Vagina (tissue), 2 donors: ENCODE measurements at regions of chr6 and their contacts with region 1.

Region 1: DNA sequence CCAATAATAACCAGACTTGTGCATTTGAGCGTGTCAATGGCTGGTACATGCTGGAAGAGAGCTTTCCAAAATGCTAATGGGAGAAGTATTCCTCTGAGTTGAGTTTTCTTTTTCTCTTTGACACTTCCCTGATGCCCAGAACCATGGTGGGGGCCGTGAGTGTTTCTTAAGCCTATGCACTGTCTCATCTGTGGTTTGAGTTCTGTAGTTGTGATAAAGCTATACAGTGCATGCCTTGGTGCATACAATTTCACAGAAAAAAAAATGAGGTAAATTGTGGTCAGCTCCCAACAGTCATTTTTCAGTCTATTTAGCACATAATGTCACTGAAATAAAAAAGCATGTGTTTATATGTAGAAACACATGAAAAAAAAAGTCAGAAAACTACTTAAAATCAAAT is 204.8 kb downstream of the HDGFL1 start:
- DNase-seq: no peak
- H3K4me3 ChIP-seq: no peak overlapping the region
- H3K27ac ChIP-seq: no peak overlapping the region
- H3K4me1 ChIP-seq: no peaks in the 10 kb centered on the region
- H3K27me3 ChIP-seq: no peaks in the 10 kb centered on the region
- CTCF ChIP-seq: no peak
- POLR2A ChIP-seq: no peak

Region 2: DNA sequence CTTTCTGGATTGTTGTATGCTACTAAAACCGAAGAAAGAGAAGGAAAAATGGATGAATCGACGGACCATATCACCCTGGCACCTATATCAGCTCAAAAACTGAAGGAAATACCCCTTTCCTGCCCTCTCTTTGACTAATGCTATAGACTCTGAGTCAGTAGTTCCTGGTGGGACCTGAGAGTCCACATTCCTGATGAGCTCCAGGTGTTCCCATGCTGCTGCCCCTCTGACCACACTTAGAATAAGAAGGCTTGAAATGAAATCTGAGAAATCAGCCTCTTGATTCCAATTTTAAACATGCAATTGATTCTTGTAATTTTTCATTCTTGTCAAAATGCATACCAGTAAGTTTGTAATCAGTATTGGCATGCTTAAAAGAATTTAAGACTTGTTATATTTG is 552.5 kb before region 1 on chr6:
- intact Hi-C with region 1: no loop called
- DNase-seq: no peak
- H3K4me3 ChIP-seq: no peak overlapping the region
- H3K27ac ChIP-seq: no peak overlapping the region
- H3K4me1 ChIP-seq: no peaks in the 10 kb centered on the region
- H3K27me3 ChIP-seq: no peaks in the 10 kb centered on the region
- CTCF ChIP-seq: no peak
- POLR2A ChIP-seq: no peak

Region 3: DNA sequence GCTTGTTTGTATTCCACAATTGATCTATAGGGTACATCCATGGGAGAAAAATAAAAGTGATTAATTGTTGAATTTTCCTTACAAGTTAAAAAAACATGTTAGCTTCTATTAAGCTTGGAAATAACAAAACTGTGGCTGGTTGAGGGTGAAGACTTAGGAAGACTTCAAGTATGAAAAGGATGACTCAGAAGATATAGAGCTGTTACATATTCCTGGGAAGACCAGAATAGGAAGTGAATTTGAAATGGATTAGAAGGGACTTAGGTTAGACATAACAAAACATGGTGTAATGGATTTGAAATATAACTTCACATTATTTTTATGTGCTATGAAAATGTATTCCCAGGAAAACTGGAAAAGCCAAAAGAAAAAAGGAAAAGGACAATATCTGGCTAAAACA is 527.4 kb after region 1 on chr6:
- intact Hi-C with region 1: loop called (anchors 10 kb)
- DNase-seq: no peak
- H3K4me3 ChIP-seq: no peak overlapping the region
- H3K27ac ChIP-seq: no peak overlapping the region
- H3K4me1 ChIP-seq: no peaks in the 10 kb centered on the region
- H3K27me3 ChIP-seq: no peaks in the 10 kb centered on the region
- CTCF ChIP-seq: no peak
- POLR2A ChIP-seq: no peak